Mammary epithelial cell (primary cell): ENCODE measurements at regions of chr7 and their contacts with region 1.

Region 1: GRCh38 chr7:43834463-43835251 is 34.7 kb downstream of the MRPS24 start:
- DNase-seq: peak; percentile 66
- H3K4me3 ChIP-seq: no peak overlapping the region
- H3K27ac ChIP-seq: no peak overlapping the region
- H3K4me1 ChIP-seq: peaks cover 3% of the 10 kb centered on the region
- H3K27me3 ChIP-seq: no peaks in the 10 kb centered on the region
- CTCF ChIP-seq: no peak

Region 2: DNA sequence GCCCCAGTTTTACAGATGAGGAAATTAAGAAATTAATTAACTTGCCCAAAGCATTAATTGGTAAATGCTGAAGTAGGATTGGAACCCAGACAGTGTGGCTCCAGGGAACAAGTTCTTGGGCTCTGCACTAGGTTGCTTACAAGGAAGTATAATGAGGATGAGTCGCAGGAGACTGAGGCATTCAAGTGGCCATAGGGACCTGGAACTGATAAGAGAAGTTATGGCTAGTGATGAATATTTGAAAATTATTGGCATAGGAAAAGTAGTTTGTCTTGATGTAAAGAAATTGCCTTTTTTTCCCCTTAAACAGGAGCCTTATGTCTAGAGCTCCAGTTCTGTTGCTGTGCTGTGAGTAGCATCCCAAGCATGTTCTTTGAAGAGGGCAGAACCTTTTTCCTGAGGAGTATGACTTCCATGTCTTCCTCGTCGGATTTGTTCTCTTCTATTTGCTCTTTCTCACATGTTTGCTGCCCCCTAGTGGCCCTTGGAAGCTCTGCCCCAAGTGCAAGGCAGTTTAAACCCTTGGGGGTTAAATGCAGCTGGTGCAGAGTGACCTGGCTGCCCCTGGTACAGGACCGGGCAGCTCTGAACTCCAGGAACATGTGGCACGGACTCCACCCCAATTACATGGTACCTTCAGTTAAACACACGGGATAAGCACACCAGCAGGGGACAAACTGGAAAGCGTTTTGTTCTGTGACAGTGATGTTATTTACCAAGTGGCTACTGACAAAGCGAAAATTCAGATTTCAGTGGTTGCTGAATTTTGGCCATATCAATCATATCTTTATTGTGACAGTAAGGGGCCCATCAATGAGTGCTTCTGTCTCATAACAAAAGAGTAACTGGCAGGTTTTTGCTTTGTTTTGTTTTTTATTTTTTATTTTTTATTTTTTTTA is 573.4 kb before region 1 on chr7:
- CTCF ChIA-PET with region 1: no interaction called
- dilution Hi-C with region 1: no loop called
- in situ Hi-C with region 1: no loop called
- intact Hi-C with region 1: loop called (anchors 2 kb)
- DNase-seq: peak; percentile 65
- H3K4me3 ChIP-seq: no peak overlapping the region
- H3K27ac ChIP-seq: no peak overlapping the region
- H3K4me1 ChIP-seq: peaks cover 3% of the 10 kb centered on the region
- H3K27me3 ChIP-seq: no peaks in the 10 kb centered on the region
- CTCF ChIP-seq: peak; percentile 94 to 95

Region 3: DNA sequence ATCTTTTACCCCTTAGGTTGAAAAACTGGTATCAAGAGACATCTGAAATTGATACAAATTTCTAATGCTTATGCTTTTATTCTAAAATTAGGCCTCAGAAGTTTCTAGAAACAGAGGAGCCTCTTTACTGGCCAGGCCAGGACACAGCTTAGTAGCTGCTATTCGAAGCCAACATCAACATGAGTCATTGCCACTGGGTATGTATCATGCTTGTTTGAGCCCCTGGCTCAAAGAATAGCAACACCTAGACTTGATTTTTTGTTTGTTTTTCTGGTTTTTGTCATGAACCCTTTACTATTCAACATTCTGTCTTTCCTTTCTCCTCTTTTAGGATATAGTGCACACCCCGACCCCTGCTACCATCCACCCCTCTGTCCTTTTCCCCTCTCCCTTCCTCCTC is 342.7 kb before region 1 on chr7:
- CTCF ChIA-PET with region 1: no interaction called
- dilution Hi-C with region 1: no loop called
- in situ Hi-C with region 1: no loop called
- intact Hi-C with region 1: loop called (anchors 10 kb)
- DNase-seq: peak; percentile 80
- H3K4me3 ChIP-seq: no peak overlapping the region
- H3K27ac ChIP-seq: no peak overlapping the region
- H3K4me1 ChIP-seq: peaks cover 4% of the 10 kb centered on the region
- H3K27me3 ChIP-seq: peaks cover 27% of the 10 kb centered on the region
- CTCF ChIP-seq: no peak

Region 4: GRCh38 chr7:43647673-43648472 is 186.8 kb before region 1 on chr7:
- CTCF ChIA-PET with region 1: interaction called, 4 read pairs
- dilution Hi-C with region 1: no loop called
- in situ Hi-C with region 1: no loop called
- intact Hi-C with region 1: loop called (anchors 5 kb)
- DNase-seq: peak; percentile 97
- H3K4me3 ChIP-seq: peak overlapping the region in 1 of 3 experiments; percentile 26
- H3K27ac ChIP-seq: peak overlapping the region; percentile 91
- H3K4me1 ChIP-seq: peaks cover 59% of the 10 kb centered on the region
- H3K27me3 ChIP-seq: no peaks in the 10 kb centered on the region
- CTCF ChIP-seq: no peak

Region 5: GRCh38 chr7:43721193-43721806 is 113.4 kb before region 1 on chr7:
- CTCF ChIA-PET with region 1: interaction called, 3 read pairs
- dilution Hi-C with region 1: no loop called
- in situ Hi-C with region 1: loop called in 1 of 2 experiments (anchors 10 kb)
- intact Hi-C with region 1: loop called (anchors 2 kb)
- DNase-seq: no peak
- H3K4me3 ChIP-seq: no peak overlapping the region
- H3K27ac ChIP-seq: no peak overlapping the region
- H3K4me1 ChIP-seq: peaks cover 4% of the 10 kb centered on the region
- H3K27me3 ChIP-seq: no peaks in the 10 kb centered on the region
- CTCF ChIP-seq: peak; percentile 50 to 55